HEK293 (cell line): ENCODE measurements at regions of chr19 and their contacts with region 1.

Region 1: DNA sequence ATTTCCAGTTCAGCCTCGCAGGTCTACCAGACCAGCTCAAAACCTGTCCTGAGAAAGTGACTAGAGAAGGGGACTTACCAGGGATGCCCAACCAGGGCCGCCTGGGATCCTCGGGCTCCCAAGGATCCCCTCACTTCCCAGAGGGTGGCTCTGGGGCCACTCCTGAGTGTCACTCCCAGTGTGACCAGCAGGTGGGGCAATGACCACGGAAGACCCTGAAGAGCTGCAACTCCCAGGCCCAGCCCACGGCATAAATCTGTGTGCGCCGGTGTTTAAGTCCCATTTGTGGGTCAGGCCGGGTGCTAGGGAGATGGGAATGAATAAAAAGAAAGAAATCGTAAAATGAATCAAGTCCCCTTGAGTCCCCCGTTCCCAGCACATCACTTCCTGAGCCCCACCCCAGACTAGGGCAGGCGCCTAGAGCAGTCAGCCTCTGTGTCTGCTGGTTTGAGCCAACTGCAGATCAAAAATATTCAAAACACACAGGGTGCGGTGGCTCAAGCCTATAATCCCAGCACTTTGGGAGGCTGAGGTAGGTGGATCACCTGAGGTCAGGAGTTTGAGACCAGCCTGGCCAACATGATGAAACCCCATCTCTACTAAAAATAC is 10.7 kb downstream of the PTGIR start:
- H3K4me3 ChIP-seq: no peak overlapping the region
- H3K27ac ChIP-seq: no peak overlapping the region
- H3K4me1 ChIP-seq: no peaks in the 10 kb centered on the region
- CTCF ChIP-seq: peak; percentile 80

Region 2: DNA sequence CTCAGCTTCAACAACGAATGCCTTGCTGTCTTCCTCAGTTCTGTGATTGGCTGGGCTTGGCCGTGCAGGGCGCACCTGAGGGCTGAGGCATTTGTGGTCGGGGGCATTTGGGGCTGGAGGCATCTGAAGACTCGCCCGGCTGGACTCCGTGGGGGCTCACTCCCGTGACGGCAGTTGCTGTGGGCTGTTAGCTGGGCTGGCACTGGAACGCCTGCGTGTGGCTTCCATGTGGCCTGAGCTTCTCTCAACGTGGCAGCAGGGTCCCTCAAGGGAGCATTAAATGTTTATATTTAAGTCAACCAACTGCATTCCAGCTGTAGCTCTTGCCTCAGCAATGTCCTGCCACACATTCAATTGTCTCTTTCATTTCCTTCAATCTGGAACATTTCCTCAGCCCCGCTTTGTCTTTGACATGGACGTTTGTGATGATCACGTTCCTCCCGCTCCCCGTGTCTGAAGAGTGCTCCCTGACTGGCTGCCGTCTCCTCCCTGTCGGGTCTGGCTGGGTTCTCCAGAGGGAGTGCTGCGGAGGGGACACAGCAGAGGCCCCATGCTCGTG is 221.9 kb before region 1 on chr19:
- CTCF ChIA-PET with region 1: no interaction called
- POLR2A ChIA-PET with region 1: no interaction called
- H3K4me3 ChIP-seq: no peak overlapping the region
- H3K27ac ChIP-seq: no peak overlapping the region
- H3K4me1 ChIP-seq: no peaks in the 10 kb centered on the region
- CTCF ChIP-seq: no peak

Region 3: GRCh38 chr19:46487802-46488445 is 126.3 kb before region 1 on chr19:
- CTCF ChIA-PET with region 1: no interaction called
- POLR2A ChIA-PET with region 1: no interaction called
- H3K4me3 ChIP-seq: peak overlapping the region; percentile 11
- H3K27ac ChIP-seq: no peak overlapping the region
- H3K4me1 ChIP-seq: peaks cover 5% of the 10 kb centered on the region; the same call in 1 of the 2 replicates
- CTCF ChIP-seq: peak; percentile 91

Region 4: DNA sequence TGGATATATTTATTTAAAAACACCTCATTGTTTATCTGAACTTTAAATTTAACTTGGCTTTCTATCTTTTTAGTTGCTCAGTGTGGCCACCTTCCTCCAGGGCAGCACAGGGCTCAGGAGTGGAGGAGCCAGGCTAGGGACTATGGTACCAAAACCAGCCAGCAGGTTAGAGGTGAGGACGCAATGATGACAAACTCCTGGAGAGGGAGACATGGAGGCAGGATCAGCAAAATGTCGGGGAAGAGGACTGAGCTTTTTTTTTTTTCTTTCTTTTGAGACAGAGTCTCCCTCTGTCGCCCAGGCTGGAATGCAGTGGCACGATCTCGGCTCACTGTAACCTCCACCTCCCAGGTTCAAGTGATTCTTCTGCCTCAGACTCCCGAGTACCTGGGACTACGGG is 42.7 kb before region 1 on chr19:
- CTCF ChIA-PET with region 1: interaction called, 16 read pairs
- POLR2A ChIA-PET with region 1: no interaction called
- H3K4me3 ChIP-seq: no peak overlapping the region
- H3K27ac ChIP-seq: no peak overlapping the region
- H3K4me1 ChIP-seq: peaks cover 5% of the 10 kb centered on the region; the same call in 1 of the 2 replicates
- CTCF ChIP-seq: peak; percentile 52; the same call in 1 of the 2 replicates

Region 5: DNA sequence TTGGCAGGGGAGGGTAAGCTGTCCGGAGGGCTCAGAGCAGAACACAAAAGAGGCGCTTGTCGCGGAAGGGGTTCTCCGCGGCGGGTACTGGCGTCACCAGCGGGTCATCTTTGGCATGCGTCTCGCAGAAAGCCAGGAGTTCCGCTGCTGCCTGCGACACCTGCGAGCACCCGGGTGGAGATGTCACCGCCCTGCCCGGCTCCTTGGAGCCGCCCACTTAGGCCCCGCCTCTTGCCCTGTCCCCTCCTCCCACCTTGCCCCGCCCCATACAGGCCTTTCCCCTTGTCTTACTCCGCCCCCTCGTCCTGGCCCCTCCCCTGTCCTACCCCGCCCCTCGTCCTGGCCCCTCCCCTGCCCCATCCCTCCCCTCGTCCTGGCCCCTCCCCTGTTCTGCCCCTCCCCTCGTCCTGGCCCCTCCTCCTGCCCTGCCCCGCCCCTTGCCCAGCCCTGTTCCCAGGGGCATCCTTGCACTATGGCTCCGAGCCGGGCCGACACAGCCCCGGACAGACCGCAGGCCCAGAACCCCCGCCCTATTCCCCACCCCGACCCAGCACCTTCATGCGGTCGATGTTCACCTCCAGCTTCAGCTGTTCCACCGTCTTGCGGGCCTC is 19.9 kb after region 1 on chr19:
- CTCF ChIA-PET with region 1: interaction called, 95 read pairs
- POLR2A ChIA-PET with region 1: interaction called, 4 read pairs
- H3K4me3 ChIP-seq: peak overlapping the region; percentile 33
- H3K27ac ChIP-seq: no peak overlapping the region
- H3K4me1 ChIP-seq: peaks cover 3% of the 10 kb centered on the region; the same call in 1 of the 2 replicates
- CTCF ChIP-seq: no peak

Region 6: GRCh38 chr19:46728693-46729676 is 114.8 kb after region 1 on chr19:
- CTCF ChIA-PET with region 1: interaction called, 17 read pairs
- POLR2A ChIA-PET with region 1: no interaction called
- H3K4me3 ChIP-seq: no peak overlapping the region
- H3K27ac ChIP-seq: no peak overlapping the region
- H3K4me1 ChIP-seq: no peaks in the 10 kb centered on the region; the same call in 1 of the 2 replicates
- CTCF ChIP-seq: peak; percentile 86